T-cell (primary cell): ENCODE measurements at regions of chr7 and their contacts with region 1.

Region 1: GRCh38 chr7:93736668-93737369 is 153.7 kb downstream of the TFPI2 start:
- DNase-seq: no peak
- ATAC-seq: no peak
- H3K4me3 ChIP-seq: no peak overlapping the region
- H3K4me3 Mint-ChIP-seq: no peak overlapping the region
- H3K27ac ChIP-seq: no peak overlapping the region
- H3K27ac Mint-ChIP-seq: no peak overlapping the region
- H3K4me1 ChIP-seq: peaks cover 0 to 4% of the 10 kb centered on the region in 2 experiments
- H3K4me1 Mint-ChIP-seq: no peaks in the 10 kb centered on the region
- H3K27me3 ChIP-seq: no peaks in the 10 kb centered on the region
- H3K27me3 Mint-ChIP-seq: no peaks in the 10 kb centered on the region

Region 2: DNA sequence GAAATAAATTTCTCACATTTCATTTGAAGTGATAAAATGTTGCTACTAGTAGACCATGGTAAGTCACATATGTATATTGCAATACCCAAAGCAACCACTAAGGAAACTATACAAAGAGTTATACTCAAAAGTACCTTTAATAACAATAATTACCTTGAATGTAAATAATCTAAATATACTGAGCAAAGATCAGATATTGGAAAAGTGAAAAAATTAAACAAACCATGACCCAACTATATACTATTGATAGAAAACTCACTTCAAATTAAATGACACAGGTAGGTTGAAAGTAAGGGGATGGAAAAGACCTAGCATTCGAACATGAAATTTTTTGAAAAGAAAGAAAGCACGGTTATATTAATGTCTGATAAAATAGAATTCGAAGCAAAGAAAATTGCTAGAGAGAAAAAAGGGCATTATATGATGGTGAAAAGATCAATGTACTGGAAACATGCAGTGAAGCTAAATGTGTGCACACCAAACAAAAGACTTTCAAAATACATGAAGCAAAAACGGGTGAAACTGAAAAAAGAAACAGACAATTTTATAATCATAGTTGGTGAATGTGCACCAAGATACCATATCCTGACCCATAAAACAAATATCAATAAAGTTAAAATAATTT is 124.6 kb after region 1 on chr7:
- CTCF ChIA-PET with region 1: no interaction called
- POLR2A ChIA-PET with region 1: interaction called in 1 of 2 experiments, 18 read pairs
- DNase-seq: no peak
- ATAC-seq: no peak
- H3K4me3 ChIP-seq: no peak overlapping the region
- H3K4me3 Mint-ChIP-seq: no peak overlapping the region
- H3K27ac ChIP-seq: no peak overlapping the region
- H3K27ac Mint-ChIP-seq: no peak overlapping the region
- H3K4me1 ChIP-seq: no peaks in the 10 kb centered on the region
- H3K4me1 Mint-ChIP-seq: no peaks in the 10 kb centered on the region
- H3K27me3 ChIP-seq: no peaks in the 10 kb centered on the region
- H3K27me3 Mint-ChIP-seq: no peaks in the 10 kb centered on the region

Region 3: DNA sequence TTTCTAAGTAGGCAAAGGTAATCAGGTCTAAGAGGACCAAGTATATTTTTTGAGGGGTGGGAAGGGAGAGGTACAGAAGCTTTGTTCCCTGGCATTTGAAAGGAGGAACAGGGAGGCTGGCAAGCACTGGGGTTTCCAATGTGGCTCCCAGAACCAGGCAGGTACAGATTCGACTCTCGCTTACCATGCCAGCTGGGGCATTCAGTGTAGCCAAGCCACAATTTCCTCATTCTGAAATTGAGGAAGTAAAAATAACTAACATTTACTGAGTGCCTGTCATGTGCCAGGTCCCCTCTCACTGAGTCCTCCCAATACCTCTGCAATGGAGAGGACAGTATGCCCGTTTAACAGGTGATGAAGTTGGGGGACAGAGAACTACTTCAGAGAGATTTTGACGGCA is 313.2 kb after region 1 on chr7:
- CTCF ChIA-PET with region 1: no interaction called
- POLR2A ChIA-PET with region 1: no interaction called
- DNase-seq: peak in 2 of 35 experiments; percentile 0 to 27
- ATAC-seq: no peak
- H3K4me3 ChIP-seq: no peak overlapping the region
- H3K4me3 Mint-ChIP-seq: no peak overlapping the region
- H3K27ac ChIP-seq: no peak overlapping the region
- H3K27ac Mint-ChIP-seq: no peak overlapping the region
- H3K4me1 ChIP-seq: no peaks in the 10 kb centered on the region
- H3K4me1 Mint-ChIP-seq: peaks cover 0 to 6% (median 3%) of the 10 kb centered on the region in 3 donors
- H3K27me3 ChIP-seq: peaks cover 0 to 4% of the 10 kb centered on the region in 2 experiments
- H3K27me3 Mint-ChIP-seq: peaks cover 11 to 21% of the 10 kb centered on the region in 2 donors